ENCODE measurements at regions of chr4 and their contacts with region 1.

Region 1: DNA sequence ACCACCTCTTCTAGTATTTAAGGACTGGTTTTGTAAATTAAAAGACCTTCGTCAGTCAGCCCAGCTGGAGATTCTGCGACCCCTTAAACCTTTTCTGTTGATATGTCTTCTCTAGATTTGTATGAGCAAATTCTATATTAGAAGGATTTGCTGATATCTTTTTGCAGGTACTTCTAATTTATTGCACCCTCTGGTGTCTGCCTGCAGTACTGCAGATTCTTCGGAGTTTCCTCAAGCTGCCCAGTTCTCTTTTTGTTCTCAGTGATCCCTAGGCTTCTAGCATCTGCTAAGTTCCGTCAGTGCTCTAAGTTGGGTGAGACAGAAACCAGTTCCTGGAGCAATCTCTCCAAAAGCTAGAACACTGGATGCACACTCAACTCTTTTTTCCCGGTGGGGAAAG is 545.2 kb downstream of the C4orf33 start:
- DNase-seq: no peak
- H3K4me3 ChIP-seq: no peak overlapping the region
- H3K27ac ChIP-seq: no peak overlapping the region
- H3K4me1 ChIP-seq: no peaks in the 10 kb centered on the region
- H3K27me3 ChIP-seq: no peaks in the 10 kb centered on the region
- CTCF ChIP-seq: peak in 5 of 6 experiments; percentile 58 to 81 (median 66)
- POLR2A ChIP-seq: no peak

Region 2: GRCh38 chr4:129362674-129363274 is 278.4 kb before region 1 on chr4:
- intact Hi-C with region 1: loop called (anchors 5 kb)
- DNase-seq: no peak
- H3K4me3 ChIP-seq: no peak overlapping the region
- H3K27ac ChIP-seq: no peak overlapping the region
- H3K4me1 ChIP-seq: peaks cover 0 to 11% (median 2%) of the 10 kb centered on the region in 3 donors
- H3K27me3 ChIP-seq: no peaks in the 10 kb centered on the region
- CTCF ChIP-seq: peak; percentile 16 to 76 (median 64)
- POLR2A ChIP-seq: no peak